ENCODE measurements at regions of chr14 and their contacts with region 1.

Region 1: GRCh38 chr14:81276073-81277069 is 55.6 kb upstream of the GTF2A1 start:
- DNase-seq: no peak
- H3K4me3 ChIP-seq: no peak overlapping the region
- H3K27ac ChIP-seq: no peak overlapping the region
- H3K4me1 ChIP-seq: no peaks in the 10 kb centered on the region
- H3K27me3 ChIP-seq: no peaks in the 10 kb centered on the region
- CTCF ChIP-seq: no peak
- POLR2A ChIP-seq: no peak

Region 2: DNA sequence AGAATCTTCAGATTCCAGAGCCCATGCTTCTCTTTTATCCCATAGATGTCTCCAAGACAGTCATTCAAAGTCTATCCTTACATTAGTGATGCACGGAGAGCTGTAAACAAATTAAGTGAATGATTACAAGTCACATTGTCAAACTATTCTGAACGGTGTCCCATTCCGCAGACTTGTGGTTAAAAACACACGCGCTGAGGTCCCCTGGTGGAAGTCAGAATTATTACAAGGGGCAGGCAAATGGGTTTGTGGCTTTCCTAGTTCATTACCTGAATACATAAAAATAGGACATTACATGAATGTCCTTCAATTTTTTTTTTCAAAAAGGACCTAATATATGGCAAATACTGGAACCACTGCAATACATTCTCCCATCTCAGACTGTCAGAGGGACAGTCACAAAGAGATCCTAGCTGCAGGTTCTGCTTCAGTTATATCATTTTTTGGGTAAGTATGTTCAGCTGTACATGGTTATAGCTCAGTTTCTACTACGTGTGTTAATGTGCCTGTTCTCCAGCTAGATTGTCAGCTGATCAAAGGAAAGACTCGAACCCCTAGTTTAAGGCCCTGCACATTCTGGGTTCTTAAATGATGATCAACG is 176.9 kb after region 1 on chr14:
- intact Hi-C with region 1: loop called in 1 of 2 experiments (anchors 5 kb)
- DNase-seq: peak; percentile 38 to 78 (median 55)
- H3K4me3 ChIP-seq: no peak overlapping the region
- H3K27ac ChIP-seq: no peak overlapping the region
- H3K4me1 ChIP-seq: no peaks in the 10 kb centered on the region
- H3K27me3 ChIP-seq: no peaks in the 10 kb centered on the region
- CTCF ChIP-seq: peak; percentile 80 to 89 (median 86)
- POLR2A ChIP-seq: no peak

Region 3: DNA sequence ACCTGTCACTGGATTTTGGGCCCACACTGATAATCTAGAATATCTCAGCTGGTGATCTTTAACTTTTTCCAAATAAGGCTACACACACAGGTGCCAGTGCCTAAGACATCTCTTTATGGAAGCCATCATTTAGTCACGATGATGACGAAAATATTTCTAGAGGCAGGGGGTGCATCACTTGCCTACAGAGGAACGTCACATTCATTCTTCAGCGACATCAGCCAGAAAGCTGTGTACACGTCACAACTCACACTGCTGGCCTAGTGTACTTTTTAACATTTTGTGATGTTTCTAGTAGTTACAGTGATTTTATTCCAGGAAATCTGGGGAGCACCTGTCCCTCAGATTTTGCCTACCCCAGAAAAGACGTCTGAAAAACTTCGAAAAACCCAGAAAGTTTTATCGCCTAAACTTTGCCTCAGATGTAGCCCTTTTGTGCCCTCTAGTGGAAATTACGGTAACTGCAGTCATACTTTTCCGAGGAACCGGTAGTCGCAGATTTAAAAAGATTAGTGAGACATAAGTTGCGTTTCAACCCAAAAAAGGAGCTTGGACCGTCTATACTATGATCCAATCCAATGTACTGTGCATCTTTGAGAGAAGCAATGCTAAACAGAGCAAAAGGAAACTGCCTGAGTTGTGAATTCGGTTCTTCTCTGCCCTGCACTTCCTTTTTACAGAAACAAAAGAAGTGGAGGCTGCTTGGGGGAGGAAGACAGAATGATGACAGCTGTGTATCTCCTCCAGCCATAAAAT is 188.1 kb after region 1 on chr14:
- intact Hi-C with region 1: loop called in 1 of 2 experiments (anchors 5 kb)
- DNase-seq: peak; percentile 39 to 73 (median 67)
- H3K4me3 ChIP-seq: peak overlapping the region in 3 of 4 donors; percentile 22 to 58 (median 24)
- H3K27ac ChIP-seq: peak overlapping the region in 2 of 5 donors; percentile 36 to 54
- H3K4me1 ChIP-seq: peaks cover 0 to 6% of the 10 kb centered on the region in 2 donors
- H3K27me3 ChIP-seq: no peaks in the 10 kb centered on the region
- CTCF ChIP-seq: peak; percentile 80 to 94 (median 88)
- POLR2A ChIP-seq: no peak

Measured in adrenal gland (tissue), 19 donors.